A549 (cell line): ENCODE measurements at regions of chr17 and their contacts with region 1.

Region 1: GRCh38 chr17:6421700-6422604 is 13.0 kb downstream of the AIPL1 start:
- DNase-seq: peak; percentile 84 to 95
- ATAC-seq: peak; percentile 86 to 93
- H3K4me3 ChIP-seq: no peak overlapping the region
- H3K27ac ChIP-seq: no peak overlapping the region
- H3K4me1 ChIP-seq: no peaks in the 10 kb centered on the region
- CTCF ChIP-seq: peak; percentile 90
- EP300 ChIP-seq: no peak
- POLR2A ChIP-seq: no peak
- RAD21 ChIP-seq: peak; percentile 99

Region 2: DNA sequence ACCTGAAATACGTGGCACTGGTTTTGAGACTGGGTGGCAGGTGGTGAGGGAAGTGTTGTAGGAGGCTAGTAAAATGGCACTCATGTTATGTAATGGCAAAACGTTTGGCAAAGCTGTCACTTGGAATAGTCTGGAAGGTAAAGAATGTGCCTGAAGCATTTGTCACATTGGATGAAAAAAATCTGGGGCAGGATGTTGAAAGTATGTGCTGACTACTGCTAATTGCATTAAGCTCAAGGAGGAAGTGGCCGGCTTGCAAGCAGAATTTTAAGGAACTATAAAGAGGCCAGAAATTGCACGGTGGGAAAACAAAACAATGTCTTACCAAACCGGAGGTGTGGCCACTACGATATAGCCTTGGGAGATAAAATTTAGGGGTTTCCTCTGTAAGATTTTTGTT is 811.0 kb before region 1 on chr17:
- CTCF ChIA-PET with region 1: interaction called, 14 read pairs
- POLR2A ChIA-PET with region 1: no interaction called
- DNase-seq: no peak
- ATAC-seq: no peak
- H3K4me3 ChIP-seq: no peak overlapping the region
- H3K27ac ChIP-seq: no peak overlapping the region
- H3K4me1 ChIP-seq: no peaks in the 10 kb centered on the region
- CTCF ChIP-seq: no peak
- EP300 ChIP-seq: no peak
- POLR2A ChIP-seq: no peak
- RAD21 ChIP-seq: no peak

Region 3: DNA sequence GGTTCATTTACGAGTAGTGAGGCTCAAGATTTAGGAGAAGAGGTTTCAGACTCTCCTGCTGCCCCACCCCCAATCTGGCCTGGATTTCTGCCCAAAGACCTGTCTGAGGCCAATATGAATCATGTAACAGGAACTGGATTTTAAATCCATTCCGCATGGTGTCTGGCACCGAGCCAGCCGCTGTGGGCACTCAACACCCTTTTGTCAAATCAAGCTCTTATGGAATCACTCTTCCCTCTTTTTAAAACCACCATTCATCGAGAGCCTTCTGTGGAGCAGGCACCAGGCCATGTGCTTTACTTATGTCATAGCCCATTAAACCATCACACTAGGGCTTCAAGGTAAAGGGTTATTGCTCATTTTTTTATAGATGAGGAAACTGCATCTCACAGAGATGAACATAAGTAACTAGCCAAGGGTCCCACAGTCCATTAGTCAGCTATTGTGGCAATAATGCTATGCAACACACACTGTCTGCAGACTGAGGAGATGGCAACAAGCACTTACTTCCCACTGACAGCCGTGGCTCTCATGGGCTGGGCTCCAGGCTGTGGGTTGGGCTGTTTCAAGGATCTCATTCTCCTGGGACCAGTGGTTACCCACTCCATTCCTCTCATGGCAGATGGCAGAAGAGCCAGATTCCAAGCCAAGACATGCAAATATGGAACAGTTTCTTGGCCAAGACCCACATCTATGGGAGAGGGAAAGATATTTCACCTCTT is 258.2 kb before region 1 on chr17:
- CTCF ChIA-PET with region 1: no interaction called
- POLR2A ChIA-PET with region 1: no interaction called
- DNase-seq: no peak
- ATAC-seq: no peak
- H3K4me3 ChIP-seq: no peak overlapping the region
- H3K27ac ChIP-seq: no peak overlapping the region
- H3K4me1 ChIP-seq: no peaks in the 10 kb centered on the region
- CTCF ChIP-seq: no peak
- EP300 ChIP-seq: no peak
- POLR2A ChIP-seq: no peak
- RAD21 ChIP-seq: no peak

Region 4: DNA sequence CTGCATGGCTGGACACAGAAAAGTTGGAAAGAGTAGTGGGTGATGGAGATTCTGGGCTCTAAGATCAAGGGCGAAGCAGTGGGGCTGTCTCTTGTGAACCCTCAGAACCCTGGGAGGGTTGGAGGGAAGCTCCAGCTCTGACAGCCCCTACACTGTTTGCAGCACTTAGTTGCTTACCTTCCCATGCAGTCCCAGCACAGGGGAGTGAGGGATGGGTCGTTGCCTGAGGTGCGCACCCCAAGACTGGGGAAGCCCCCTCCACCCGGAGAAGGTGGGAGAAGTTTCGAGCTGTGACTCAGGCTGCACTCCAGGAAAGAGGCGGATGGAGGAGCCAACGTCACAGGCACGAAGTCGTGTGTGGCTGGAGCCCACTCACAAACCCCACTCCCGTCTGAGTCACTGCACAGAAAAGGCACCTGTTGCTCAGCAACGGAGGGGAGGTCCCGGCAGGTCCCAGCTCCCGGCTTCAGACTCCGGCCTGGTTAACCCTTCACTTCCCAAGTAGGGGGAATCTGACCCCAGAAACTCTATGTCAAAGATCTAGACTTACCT is 47.1 kb before region 1 on chr17:
- CTCF ChIA-PET with region 1: no interaction called
- POLR2A ChIA-PET with region 1: no interaction called
- DNase-seq: peak; percentile 66 to 86
- ATAC-seq: peak; percentile 88 to 92
- H3K4me3 ChIP-seq: no peak overlapping the region
- H3K27ac ChIP-seq: peak overlapping the region in 1 of 2 experiments; percentile 38; a peak in 5 of 6 replicates
- H3K4me1 ChIP-seq: peaks cover 18% of the 10 kb centered on the region
- CTCF ChIP-seq: no peak
- EP300 ChIP-seq: no peak
- POLR2A ChIP-seq: no peak
- RAD21 ChIP-seq: 0 out of 5 replicates have a peak, but pooled peaks have one; percentile 13 to 18

Region 5: DNA sequence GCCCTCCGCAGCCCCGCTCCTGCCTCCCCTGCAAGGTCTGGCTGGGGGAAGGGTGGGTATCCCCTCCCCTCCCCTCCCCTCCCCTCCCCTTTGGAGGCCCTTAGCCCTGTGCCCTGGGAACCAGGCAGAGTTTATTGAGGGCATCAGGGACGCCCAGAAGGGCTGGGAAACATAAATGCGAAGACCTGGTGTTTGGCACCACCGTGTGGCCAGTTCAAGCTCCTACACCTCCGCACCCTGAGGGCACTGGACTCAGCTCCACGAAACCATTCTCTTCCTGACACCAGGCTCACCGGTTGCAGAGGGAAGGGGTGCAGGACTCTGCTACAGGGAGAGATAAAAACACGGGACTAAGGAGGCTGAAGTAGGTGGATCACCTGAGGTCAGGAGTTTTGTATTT is 14.0 kb after region 1 on chr17:
- CTCF ChIA-PET with region 1: interaction called, 76 read pairs
- POLR2A ChIA-PET with region 1: no interaction called
- DNase-seq: peak; percentile 79 to 90
- ATAC-seq: peak; percentile 93 to 98
- H3K4me3 ChIP-seq: no peak overlapping the region
- H3K27ac ChIP-seq: no peak overlapping the region
- H3K4me1 ChIP-seq: no peaks in the 10 kb centered on the region
- CTCF ChIP-seq: peak; percentile 84
- EP300 ChIP-seq: no peak
- POLR2A ChIP-seq: no peak
- RAD21 ChIP-seq: peak; percentile 87 to 88

Region 6: GRCh38 chr17:6456914-6457687 is 35.1 kb after region 1 on chr17:
- CTCF ChIA-PET with region 1: no interaction called
- POLR2A ChIA-PET with region 1: no interaction called
- DNase-seq: peak; percentile 57 to 87
- ATAC-seq: peak; percentile 58 to 68; a peak in 5 of 6 replicates
- H3K4me3 ChIP-seq: no peak overlapping the region
- H3K27ac ChIP-seq: peak overlapping the region; percentile 32 to 41; a peak in 4 of 6 replicates
- H3K4me1 ChIP-seq: peaks cover 18% of the 10 kb centered on the region
- CTCF ChIP-seq: no peak
- EP300 ChIP-seq: no peak
- POLR2A ChIP-seq: no peak
- RAD21 ChIP-seq: no peak